ENCODE measurements at regions of chr17 and their contacts with region 1.

Region 1: DNA sequence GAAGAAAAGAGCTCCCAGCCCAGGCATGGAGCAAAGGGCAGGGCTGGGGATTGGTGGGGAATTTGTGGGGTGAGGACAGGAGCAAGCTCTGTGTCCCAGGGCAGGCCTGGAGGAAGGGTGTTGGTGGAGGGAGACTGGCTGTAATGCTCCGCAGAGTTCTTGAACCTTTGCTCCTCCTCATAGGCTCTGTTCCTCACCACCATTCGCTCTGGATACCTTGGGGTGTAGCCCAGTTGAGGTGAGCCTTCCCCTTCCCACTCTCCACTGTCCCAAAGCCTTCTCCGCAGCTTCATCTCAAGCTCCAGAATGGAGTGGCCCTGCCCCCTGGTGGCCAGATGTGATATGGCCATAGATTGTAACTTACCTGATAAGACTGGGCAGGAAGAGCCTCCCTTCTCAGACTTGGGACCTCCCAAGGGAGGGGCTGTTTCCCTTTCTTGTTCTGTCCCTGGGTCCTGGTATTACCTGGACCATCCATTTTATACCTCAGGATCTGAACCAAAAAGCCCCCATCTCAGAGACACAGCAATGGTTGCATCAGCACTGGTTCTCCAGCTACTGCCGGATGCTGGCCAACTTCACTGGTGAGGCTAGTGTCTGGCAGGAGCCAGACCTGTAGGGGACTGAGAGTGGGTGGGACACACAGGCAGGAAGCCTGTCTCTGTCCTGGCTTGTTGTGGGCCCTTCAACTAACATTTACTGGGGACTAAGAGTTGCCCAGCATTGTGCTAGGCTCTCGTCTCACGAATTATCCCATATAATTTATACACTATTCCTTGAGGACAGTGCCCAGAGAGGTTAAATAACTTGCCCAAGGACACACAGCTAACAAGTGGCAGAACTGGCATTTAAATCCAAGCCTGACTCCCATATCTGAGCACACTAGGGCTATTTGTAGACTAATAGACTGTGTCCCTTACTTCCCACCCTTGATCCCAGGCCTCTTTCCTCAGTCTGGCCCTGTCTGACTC is 19.1 kb upstream of the STAC2 start:
- DNase-seq: peak; percentile 58 to 91 (median 79)
- ATAC-seq: peak; percentile 89 to 93 (median 92)
- H3K4me3 ChIP-seq: no peak overlapping the region
- H3K4me3 Mint-ChIP-seq: no peak overlapping the region
- H3K27ac ChIP-seq: no peak overlapping the region
- H3K27ac Mint-ChIP-seq: no peak overlapping the region
- H3K4me1 ChIP-seq: peaks cover 0 to 15% of the 10 kb centered on the region in 2 experiments
- H3K4me1 Mint-ChIP-seq: peaks cover 12 to 15% (median 14%) of the 10 kb centered on the region in 3 donors
- H3K27me3 ChIP-seq: peaks cover 0 to 3% of the 10 kb centered on the region in 2 experiments
- H3K27me3 Mint-ChIP-seq: peaks cover 0 to 2% of the 10 kb centered on the region in 2 donors

Region 2: GRCh38 chr17:38970128-38970527 is 274.8 kb before region 1 on chr17:
- CTCF ChIA-PET with region 1: interaction called in 1 of 2 experiments, 10 read pairs
- POLR2A ChIA-PET with region 1: no interaction called
- DNase-seq: no peak
- ATAC-seq: no peak
- H3K4me3 ChIP-seq: no peak overlapping the region
- H3K4me3 Mint-ChIP-seq: no peak overlapping the region
- H3K27ac ChIP-seq: no peak overlapping the region
- H3K27ac Mint-ChIP-seq: no peak overlapping the region
- H3K4me1 ChIP-seq: peaks cover 4 to 15% of the 10 kb centered on the region in 2 experiments
- H3K4me1 Mint-ChIP-seq: peaks cover 15 to 16% (median 15%) of the 10 kb centered on the region in 3 donors
- H3K27me3 ChIP-seq: no peaks in the 10 kb centered on the region
- H3K27me3 Mint-ChIP-seq: no peaks in the 10 kb centered on the region

Region 3: GRCh38 chr17:39164675-39165143 is 80.2 kb before region 1 on chr17:
- CTCF ChIA-PET with region 1: interaction called, 4 to 16 read pairs
- POLR2A ChIA-PET with region 1: no interaction called
- DNase-seq: peak; percentile 51 to 83 (median 69)
- ATAC-seq: peak; percentile 91 to 94 (median 93)
- H3K4me3 ChIP-seq: peak overlapping the region; percentile 76 to 85
- H3K4me3 Mint-ChIP-seq: peak overlapping the region; percentile 79 to 86 (median 85)
- H3K27ac ChIP-seq: no peak overlapping the region
- H3K27ac Mint-ChIP-seq: peak overlapping the region in 1 of 2 donors; percentile 11
- H3K4me1 ChIP-seq: peaks cover 5 to 40% of the 10 kb centered on the region in 2 experiments
- H3K4me1 Mint-ChIP-seq: peaks cover 23 to 32% (median 30%) of the 10 kb centered on the region in 3 donors
- H3K27me3 ChIP-seq: peaks cover 0 to 54% of the 10 kb centered on the region in 2 experiments
- H3K27me3 Mint-ChIP-seq: peaks cover 23 to 33% of the 10 kb centered on the region in 2 donors

Region 4: DNA sequence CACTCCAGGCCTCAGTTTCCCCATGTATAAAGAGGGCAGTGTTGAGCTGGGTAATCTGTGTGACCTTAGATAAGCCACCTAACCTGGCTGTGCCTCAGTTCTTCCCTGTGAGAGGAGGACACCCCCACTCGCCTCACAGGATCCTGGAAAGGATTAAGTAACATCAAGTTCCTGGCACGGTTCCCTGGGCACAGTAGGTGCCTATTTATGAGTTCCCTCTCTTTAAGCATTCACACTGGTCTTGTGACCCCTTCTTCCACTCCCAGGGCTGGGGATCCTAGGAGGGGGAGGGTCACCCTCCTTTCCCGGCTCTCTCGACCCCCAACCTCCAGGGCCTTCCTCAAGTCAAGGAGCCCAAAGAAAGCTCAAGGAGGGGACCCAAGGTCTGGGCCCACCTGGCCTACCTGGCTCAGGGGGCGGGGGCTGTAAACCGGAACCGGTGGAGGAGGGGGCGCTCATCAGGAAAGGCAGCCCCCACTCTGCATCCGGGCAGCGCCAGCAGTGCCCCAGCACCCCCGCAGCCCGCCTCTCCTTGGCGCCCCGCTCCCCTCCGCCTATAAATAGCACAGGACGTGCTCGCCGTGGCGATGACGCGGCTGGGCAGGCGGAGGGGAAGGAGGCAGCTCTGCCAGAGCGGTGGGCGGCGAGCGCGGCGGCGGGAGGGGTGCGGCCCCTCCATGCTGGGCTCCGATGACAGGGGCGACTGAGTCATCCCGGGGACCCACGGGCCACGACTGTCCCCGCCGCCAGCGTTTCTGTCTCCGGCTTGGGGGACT is 35.4 kb before region 1 on chr17:
- CTCF ChIA-PET with region 1: interaction called, 19 to 51 read pairs
- POLR2A ChIA-PET with region 1: no interaction called
- DNase-seq: peak; percentile 34 to 75 (median 61)
- ATAC-seq: peak; percentile 68 to 76 (median 74)
- H3K4me3 ChIP-seq: peak overlapping the region; percentile 53 to 59
- H3K4me3 Mint-ChIP-seq: peak overlapping the region in 2 of 3 donors; percentile 37 to 67
- H3K27ac ChIP-seq: peak overlapping the region; percentile 71
- H3K27ac Mint-ChIP-seq: peak overlapping the region; percentile 28 to 39
- H3K4me1 ChIP-seq: peaks cover 11 to 34% of the 10 kb centered on the region in 2 experiments
- H3K4me1 Mint-ChIP-seq: peaks cover 26 to 37% (median 27%) of the 10 kb centered on the region in 3 donors
- H3K27me3 ChIP-seq: peaks cover 0 to 32% of the 10 kb centered on the region in 2 experiments
- H3K27me3 Mint-ChIP-seq: peaks cover 0 to 11% of the 10 kb centered on the region in 2 donors

Region 5: GRCh38 chr17:39730095-39730921 is 485.4 kb after region 1 on chr17 and contains the start of gene MIEN1:
- CTCF ChIA-PET with region 1: no interaction called
- POLR2A ChIA-PET with region 1: interaction called in 1 of 2 experiments, 14 read pairs
- DNase-seq: peak; percentile 69 to 98 (median 90)
- ATAC-seq: peak; percentile 93 to 98 (median 94)
- H3K4me3 ChIP-seq: peak within 1 kb of the TSS; percentile 49 to 90
- H3K4me3 Mint-ChIP-seq: peak within 1 kb of the TSS; percentile 86 to 90 (median 89)
- H3K27ac ChIP-seq: peak within 1 kb of the TSS; percentile 82
- H3K27ac Mint-ChIP-seq: peak within 1 kb of the TSS; percentile 88 to 89
- H3K4me1 ChIP-seq: peaks cover 4 to 31% of the 10 kb centered on the region in 2 experiments
- H3K4me1 Mint-ChIP-seq: peaks cover 15 to 22% (median 21%) of the 10 kb centered on the region in 3 donors
- H3K27me3 ChIP-seq: no peaks in the 10 kb centered on the region
- H3K27me3 Mint-ChIP-seq: no peaks in the 10 kb centered on the region
- total RNA-seq, gene MIEN1: 30.8 to 36.9 (median 32.1) TPM